RWPE1 (cell line): ENCODE measurements at regions of chr5 and their contacts with region 1.

Region 1: DNA sequence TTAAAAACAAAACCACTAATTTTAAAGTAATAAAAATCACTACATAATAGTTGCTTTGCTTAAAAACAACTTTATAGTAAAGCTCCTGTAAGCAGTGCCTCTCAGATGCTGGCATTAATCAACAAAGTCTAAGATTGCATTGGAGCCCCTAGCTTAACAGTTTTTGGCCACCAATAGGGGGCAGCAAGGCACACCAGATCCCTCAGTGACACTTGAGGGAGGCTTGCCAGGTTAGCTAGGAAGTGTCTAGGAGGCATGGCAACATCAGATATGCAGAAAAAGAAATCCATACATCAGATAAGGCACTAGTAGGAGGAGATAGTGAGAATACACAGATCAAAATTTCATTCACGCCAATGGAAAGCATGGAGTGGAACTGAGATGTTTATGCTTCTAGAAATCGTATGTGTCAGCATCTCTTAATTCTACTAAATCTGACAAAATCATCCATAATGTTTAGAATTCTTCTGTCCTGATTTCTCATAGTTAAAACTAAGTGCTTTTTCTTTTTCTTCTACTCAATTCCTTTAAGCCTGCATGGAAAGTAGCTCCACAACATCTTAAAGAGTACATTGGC is 73.6 kb upstream of the PAM start:
- DNase-seq: peak; percentile 68
- H3K27ac ChIP-seq: no peak overlapping the region
- CTCF ChIP-seq: peak; percentile 80

Region 2: DNA sequence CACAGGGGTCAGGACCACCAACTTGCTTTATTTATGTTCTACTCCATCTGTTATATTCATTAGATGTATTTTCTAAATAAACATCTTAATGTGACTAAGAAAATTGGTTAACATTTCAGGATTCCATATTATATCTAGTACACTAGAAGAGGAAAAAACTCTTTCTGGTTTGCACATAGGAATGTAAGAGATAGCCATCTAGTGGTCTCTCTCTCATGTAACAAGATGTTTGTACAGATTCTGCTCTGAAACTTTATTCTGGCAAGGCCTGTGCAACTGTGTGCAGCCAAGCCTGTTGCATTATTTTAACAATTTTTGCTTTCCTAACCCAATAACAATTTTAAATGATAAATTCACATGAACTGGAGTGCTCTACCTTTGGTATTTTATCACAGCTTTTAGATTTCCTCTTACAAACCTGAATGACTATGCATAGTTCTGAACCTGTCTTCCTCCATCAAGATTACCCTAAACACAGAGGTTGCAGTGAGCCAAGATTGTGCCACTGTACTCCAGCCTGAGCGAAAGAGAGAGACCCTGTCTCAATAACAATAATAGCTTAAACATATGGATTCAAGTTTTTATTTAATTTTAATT is 290.3 kb after region 1 on chr5:
- CTCF ChIA-PET with region 1: interaction called, 12 read pairs
- POLR2A ChIA-PET with region 1: no interaction called
- DNase-seq: peak; percentile 42
- H3K27ac ChIP-seq: no peak overlapping the region
- CTCF ChIP-seq: peak; percentile 75

Region 3: GRCh38 chr5:103003872-103004271 is 322.4 kb after region 1 on chr5:
- CTCF ChIA-PET with region 1: interaction called, 10 read pairs
- POLR2A ChIA-PET with region 1: no interaction called
- DNase-seq: no peak
- H3K27ac ChIP-seq: no peak overlapping the region
- CTCF ChIP-seq: no peak